PC-9 (cell line): ENCODE measurements at regions of chr7 and their contacts with region 1.

Region 1: DNA sequence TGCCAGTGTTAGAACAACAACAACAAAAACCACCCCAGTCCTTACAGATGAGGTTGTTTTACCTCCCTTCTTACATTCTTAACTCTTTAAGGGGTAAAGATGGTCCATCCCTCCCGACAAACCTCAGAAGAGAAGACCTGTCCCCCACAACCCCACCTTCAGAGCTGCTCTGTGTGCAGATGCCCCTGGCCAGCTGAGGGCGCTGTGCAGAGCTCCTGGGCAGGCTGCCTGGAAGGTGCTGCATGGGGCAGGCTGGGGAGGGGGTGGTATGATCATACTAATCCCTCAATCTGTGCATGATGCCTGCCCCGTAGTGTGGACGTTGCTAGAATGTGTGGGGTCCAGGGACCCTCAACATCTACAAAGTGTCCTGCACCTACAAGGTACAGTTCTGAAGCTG is 387.1 kb downstream of the INHBA start:
- DNase-seq: no peak
- H3K4me3 ChIP-seq: no peak overlapping the region
- H3K27ac ChIP-seq: no peak overlapping the region
- H3K4me1 ChIP-seq: no peaks in the 10 kb centered on the region
- H3K27me3 ChIP-seq: no peaks in the 10 kb centered on the region
- CTCF ChIP-seq: peak; percentile 53

Region 2: GRCh38 chr7:41277561-41277960 is 38.2 kb before region 1 on chr7:
- CTCF ChIA-PET with region 1: no interaction called
- POLR2A ChIA-PET with region 1: interaction called, 14 read pairs
- intact Hi-C with region 1: no loop called
- DNase-seq: no peak
- H3K4me3 ChIP-seq: no peak overlapping the region
- H3K27ac ChIP-seq: no peak overlapping the region
- H3K4me1 ChIP-seq: no peaks in the 10 kb centered on the region
- H3K27me3 ChIP-seq: no peaks in the 10 kb centered on the region
- CTCF ChIP-seq: no peak